ENCODE measurements at regions of chr7 and their contacts with region 1.

Region 1: DNA sequence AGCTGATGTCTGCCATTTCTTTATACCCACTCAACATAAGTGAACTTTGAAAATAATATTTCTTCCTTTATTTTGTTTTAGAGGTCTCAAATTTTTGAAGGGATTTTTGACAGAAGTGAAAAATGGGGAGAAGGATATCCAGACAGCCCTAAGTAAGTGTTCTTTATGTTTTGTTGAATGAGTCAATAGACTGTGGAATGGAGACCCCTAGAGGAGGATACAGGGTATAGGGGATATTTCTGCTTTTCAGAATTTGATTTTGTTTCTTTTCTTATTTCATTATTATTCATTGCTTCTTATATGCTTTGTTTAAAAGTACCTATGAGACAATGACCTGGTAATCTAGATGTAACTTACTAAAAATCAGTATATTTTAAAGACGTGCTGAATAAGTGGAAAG is 34.4 kb downstream of the PLEKHA8 start:
- DNase-seq: no peak
- ATAC-seq: peak; percentile 87
- H3K4me3 Mint-ChIP-seq: no peak overlapping the region
- H3K27ac Mint-ChIP-seq: peak overlapping the region; percentile 50
- H3K4me1 Mint-ChIP-seq: peaks cover 20% of the 10 kb centered on the region
- H3K27me3 Mint-ChIP-seq: no peaks in the 10 kb centered on the region
- CTCF ChIP-seq: peak; percentile 42

Region 2: GRCh38 chr7:29921404-29922010 is 141.1 kb before region 1 on chr7:
- CTCF ChIA-PET with region 1: interaction called, 25 read pairs
- POLR2A ChIA-PET with region 1: no interaction called
- intact Hi-C with region 1: loop called (anchors 1 kb)
- DNase-seq: no peak
- ATAC-seq: peak; percentile 97
- H3K4me3 Mint-ChIP-seq: no peak overlapping the region
- H3K27ac Mint-ChIP-seq: no peak overlapping the region
- H3K4me1 Mint-ChIP-seq: no peaks in the 10 kb centered on the region
- H3K27me3 Mint-ChIP-seq: no peaks in the 10 kb centered on the region
- CTCF ChIP-seq: no peak

Region 3: GRCh38 chr7:29988424-29989256 is 74.0 kb before region 1 on chr7:
- CTCF ChIA-PET with region 1: interaction called, 5 read pairs
- POLR2A ChIA-PET with region 1: no interaction called
- intact Hi-C with region 1: loop called (anchors 2 kb)
- DNase-seq: peak; percentile 60
- ATAC-seq: peak; percentile 27
- H3K4me3 Mint-ChIP-seq: peak overlapping the region; percentile 93
- H3K27ac Mint-ChIP-seq: peak overlapping the region; percentile 97
- H3K4me1 Mint-ChIP-seq: peaks cover 37% of the 10 kb centered on the region
- H3K27me3 Mint-ChIP-seq: no peaks in the 10 kb centered on the region
- CTCF ChIP-seq: no peak

Region 4: GRCh38 chr7:30048582-30048981 is 14.0 kb before region 1 on chr7:
- CTCF ChIA-PET with region 1: interaction called, 10 read pairs
- POLR2A ChIA-PET with region 1: no interaction called
- intact Hi-C with region 1: no loop called
- DNase-seq: no peak
- ATAC-seq: no peak
- H3K4me3 Mint-ChIP-seq: no peak overlapping the region
- H3K27ac Mint-ChIP-seq: no peak overlapping the region
- H3K4me1 Mint-ChIP-seq: no peaks in the 10 kb centered on the region
- H3K27me3 Mint-ChIP-seq: no peaks in the 10 kb centered on the region
- CTCF ChIP-seq: no peak

Region 5: DNA sequence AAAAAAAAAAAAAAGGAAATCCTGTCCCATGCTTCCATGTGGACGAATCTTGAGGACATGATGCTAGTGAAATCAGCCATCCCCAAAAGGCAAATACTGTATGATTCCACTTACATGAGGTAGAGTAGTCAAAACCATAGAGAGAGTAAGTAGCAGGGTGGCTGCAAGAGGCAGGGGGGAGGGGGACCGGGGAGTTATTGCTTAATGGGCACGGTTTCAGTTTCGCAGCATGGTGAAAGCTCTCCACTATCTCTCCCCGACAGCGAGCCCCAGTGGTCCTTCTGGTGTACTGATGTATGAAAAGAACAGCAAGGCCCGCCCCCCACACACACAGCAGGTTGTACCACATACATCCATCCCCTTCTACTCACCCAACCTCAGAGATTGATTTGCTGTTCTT is 383.2 kb after region 1 on chr7:
- CTCF ChIA-PET with region 1: no interaction called
- POLR2A ChIA-PET with region 1: no interaction called
- intact Hi-C with region 1: loop called (anchors 5 kb)
- DNase-seq: peak; percentile 66
- ATAC-seq: peak; percentile 100
- H3K4me3 Mint-ChIP-seq: no peak overlapping the region
- H3K27ac Mint-ChIP-seq: peak overlapping the region; percentile 64
- H3K4me1 Mint-ChIP-seq: peaks cover 6% of the 10 kb centered on the region
- H3K27me3 Mint-ChIP-seq: no peaks in the 10 kb centered on the region
- CTCF ChIP-seq: no peak

Measured in activated B cell treated with CpG ODN at 0.5 μM for 24 hours (primary cell).